Activated CD4-positive, alpha-beta T cell treated with anti-CD3 and anti-CD28 coated beads, Interleukin-2, amount 10 ng/mL, durations not matched to agents 24 days and 14 days (primary cell): ENCODE measurements at regions of chr11 and their contacts with region 1.

Region 1: DNA sequence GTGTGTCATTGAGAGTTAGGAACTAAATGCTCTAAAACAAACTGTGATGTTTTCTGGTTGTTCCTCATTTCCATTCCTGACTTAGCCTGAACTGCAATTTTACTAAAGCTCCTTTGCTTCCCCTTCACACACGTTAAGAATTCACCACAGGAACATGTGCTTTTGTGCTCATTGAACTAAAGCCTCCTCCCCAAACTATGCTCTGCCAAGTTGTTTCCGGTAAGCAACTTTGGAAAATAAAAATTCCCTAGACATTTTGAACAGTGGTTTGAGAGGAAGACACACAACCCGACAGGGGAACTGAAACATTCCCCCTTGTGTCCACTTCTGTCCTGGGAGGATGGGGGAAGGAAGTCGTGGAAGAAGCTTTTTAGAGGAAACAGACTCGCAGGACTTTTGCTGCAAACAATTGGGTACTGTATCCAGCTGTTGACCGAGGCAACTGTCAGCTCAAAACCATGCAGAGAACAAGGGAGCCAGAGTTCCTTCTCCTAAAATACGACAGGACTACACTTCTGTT is 66.9 kb downstream of the GAB2 start:
- DNase-seq: no peak
- H3K4me3 Mint-ChIP-seq: peak overlapping the region; percentile 82
- H3K27ac Mint-ChIP-seq: peak overlapping the region; percentile 82
- H3K4me1 Mint-ChIP-seq: peaks cover 62% of the 10 kb centered on the region
- H3K27me3 Mint-ChIP-seq: no peaks in the 10 kb centered on the region

Region 2: GRCh38 chr11:77981346-77981947 is 369.3 kb before region 1 on chr11:
- intact Hi-C with region 1: no loop called
- DNase-seq: no peak
- H3K4me3 Mint-ChIP-seq: no peak overlapping the region
- H3K27ac Mint-ChIP-seq: no peak overlapping the region
- H3K4me1 Mint-ChIP-seq: peaks cover 12% of the 10 kb centered on the region
- H3K27me3 Mint-ChIP-seq: no peaks in the 10 kb centered on the region

Region 3: DNA sequence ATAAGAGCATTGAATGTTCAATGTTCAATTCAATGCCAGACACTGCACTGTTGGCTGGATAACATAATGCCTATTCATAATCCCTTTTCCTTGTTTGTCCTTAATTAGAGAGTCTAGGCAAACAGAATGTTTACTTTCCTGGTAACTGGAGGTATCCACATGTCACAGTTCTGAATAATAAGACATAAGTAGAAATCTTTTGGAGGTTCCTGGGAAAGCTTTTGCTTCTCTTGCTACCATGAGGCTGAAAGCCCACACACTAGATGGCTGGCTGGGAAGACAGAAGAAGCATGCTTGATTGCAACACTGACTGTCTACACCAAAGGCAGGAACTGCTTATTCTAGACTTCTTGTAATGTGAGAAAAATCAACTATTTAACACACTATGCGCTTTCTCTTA is 12.6 kb before region 1 on chr11:
- intact Hi-C with region 1: loop called (anchors 1 kb)
- DNase-seq: no peak
- H3K4me3 Mint-ChIP-seq: peak overlapping the region; percentile 12
- H3K27ac Mint-ChIP-seq: peak overlapping the region; percentile 94
- H3K4me1 Mint-ChIP-seq: peaks cover 73% of the 10 kb centered on the region
- H3K27me3 Mint-ChIP-seq: no peaks in the 10 kb centered on the region

Region 4: DNA sequence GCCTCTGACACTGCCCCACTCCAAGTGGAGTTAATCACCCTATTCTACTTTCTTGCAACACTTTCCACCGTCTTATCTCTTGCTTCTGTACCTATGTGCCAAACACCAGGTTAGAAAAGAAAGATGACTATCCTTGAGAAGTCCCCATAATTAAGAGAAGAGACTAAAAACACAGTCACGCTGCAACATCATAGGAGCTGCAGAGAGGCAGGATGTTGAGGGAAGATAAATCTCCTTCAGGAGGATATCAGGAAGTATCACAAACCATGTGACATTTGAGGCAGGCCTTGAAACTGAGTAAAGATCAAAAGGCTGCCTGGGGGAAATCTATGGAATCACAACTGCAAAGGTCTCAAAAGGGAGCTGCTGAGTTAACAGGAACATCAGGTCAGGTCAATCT is 42.1 kb after region 1 on chr11:
- intact Hi-C with region 1: loop called (anchors 5 kb)
- DNase-seq: no peak
- H3K4me3 Mint-ChIP-seq: no peak overlapping the region
- H3K27ac Mint-ChIP-seq: peak overlapping the region; percentile 9
- H3K4me1 Mint-ChIP-seq: peaks cover 29% of the 10 kb centered on the region
- H3K27me3 Mint-ChIP-seq: no peaks in the 10 kb centered on the region